Posterior vena cava (tissue), 2 donors: ENCODE measurements at regions of chr4 and their contacts with region 1.

Region 1: GRCh38 chr4:89371614-89372013 is 64.0 kb upstream of the GPRIN3 start:
- DNase-seq: no peak

Region 2: GRCh38 chr4:88411473-88412096 is 960.0 kb before region 1 on chr4:
- intact Hi-C with region 1: loop called in 1 of 2 experiments (anchors 5 kb)
- DNase-seq: no peak